PC-9 (cell line): ENCODE measurements at regions of chr18 and their contacts with region 1.

Region 1: GRCh38 chr18:3665780-3666525 is 216.0 kb downstream of the TGIF1 start:
- DNase-seq: peak; percentile 78 to 89
- H3K4me3 ChIP-seq: peak overlapping the region; percentile 45; the same call in 1 of the 2 replicates
- H3K27ac ChIP-seq: peak overlapping the region; percentile 96
- H3K4me1 ChIP-seq: peaks cover 33% of the 10 kb centered on the region
- H3K27me3 ChIP-seq: no peaks in the 10 kb centered on the region
- CTCF ChIP-seq: peak; percentile 97

Region 2: GRCh38 chr18:3261371-3262246 is 404.3 kb before region 1 on chr18 and contains the start of gene MYL12B:
- CTCF ChIA-PET with region 1: no interaction called
- POLR2A ChIA-PET with region 1: interaction called, 4 read pairs
- intact Hi-C with region 1: loop called (anchors 5 kb)
- DNase-seq: peak; percentile 77 to 89
- H3K4me3 ChIP-seq: peak within 1 kb of the TSS; percentile 100
- H3K27ac ChIP-seq: peak within 1 kb of the TSS; percentile 93
- H3K4me1 ChIP-seq: peaks cover 39% of the 10 kb centered on the region
- H3K27me3 ChIP-seq: no peaks in the 10 kb centered on the region
- CTCF ChIP-seq: no peak
- total RNA-seq, gene MYL12B: 381 and 383 TPM in 2 replicates

Region 3: DNA sequence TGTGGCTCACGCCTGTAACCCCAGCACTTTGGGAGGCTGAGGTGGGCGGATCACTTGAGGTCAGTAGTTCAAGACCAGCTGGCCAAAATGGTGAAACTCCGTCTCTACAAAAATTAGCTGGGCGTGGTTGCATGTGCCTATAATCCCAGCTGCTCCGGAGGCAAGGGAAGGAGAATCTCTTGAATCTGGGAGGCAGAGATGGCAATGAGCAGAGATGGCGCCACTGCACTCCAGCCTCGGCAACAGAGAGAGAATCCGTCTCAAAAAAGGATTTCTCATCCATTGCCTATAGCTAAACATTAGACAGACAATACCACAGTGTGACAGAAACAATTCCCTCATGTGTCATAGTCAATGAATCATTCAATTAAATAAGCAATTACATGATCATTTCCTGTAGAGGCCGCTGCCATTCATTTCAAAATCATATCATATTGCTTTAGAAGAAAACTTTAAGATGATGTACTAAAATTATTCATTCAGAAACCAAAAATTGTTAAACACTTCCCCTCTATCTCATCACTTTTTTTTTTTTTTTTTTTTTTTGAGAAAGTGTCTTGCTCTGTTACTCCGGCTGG is 285.5 kb before region 1 on chr18:
- CTCF ChIA-PET with region 1: interaction called, 6 read pairs
- POLR2A ChIA-PET with region 1: interaction called, 3 read pairs
- intact Hi-C with region 1: loop called (anchors 5 kb)
- DNase-seq: peak in 1 of 2 experiments; percentile 81
- H3K4me3 ChIP-seq: peak overlapping the region; percentile 35; the same call in 1 of the 2 replicates
- H3K27ac ChIP-seq: peak overlapping the region; percentile 99
- H3K4me1 ChIP-seq: peaks cover 64% of the 10 kb centered on the region
- H3K27me3 ChIP-seq: no peaks in the 10 kb centered on the region
- CTCF ChIP-seq: peak; percentile 44; the same call in 1 of the 2 replicates

Region 4: DNA sequence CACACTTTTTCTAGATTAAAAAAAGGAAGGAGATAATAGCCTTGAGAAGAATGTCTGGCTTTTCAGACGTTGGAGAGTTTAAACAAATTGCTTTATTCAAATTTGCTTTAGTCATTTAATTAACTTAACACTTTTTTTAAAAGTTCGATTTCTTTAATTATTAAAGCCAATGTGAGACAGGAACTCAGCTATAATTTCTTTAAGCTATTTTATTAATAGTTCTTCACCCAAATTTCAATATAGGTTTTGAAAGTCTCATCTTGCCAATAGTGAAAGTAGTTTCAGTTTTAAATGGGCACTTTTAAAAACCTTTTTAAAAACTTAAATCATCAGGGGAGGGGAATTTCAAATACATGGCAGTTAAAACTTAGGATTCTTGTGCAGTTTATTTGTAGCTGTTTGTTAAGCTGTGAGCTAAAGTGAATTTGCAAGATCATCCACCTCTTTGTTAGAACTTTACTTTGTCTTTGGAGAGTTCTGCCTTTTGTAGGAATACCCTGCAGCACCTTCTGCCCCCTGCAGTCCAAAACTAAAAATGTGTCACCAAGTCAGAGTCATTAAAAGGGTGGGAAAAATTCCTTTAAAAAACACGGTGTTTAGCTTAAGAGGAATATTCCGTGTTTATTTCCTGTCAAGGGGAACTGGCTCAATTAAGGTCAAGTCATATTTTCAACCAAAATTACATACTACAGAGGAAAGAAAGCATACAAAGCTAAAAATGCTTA is 211.4 kb before region 1 on chr18:
- CTCF ChIA-PET with region 1: no interaction called
- POLR2A ChIA-PET with region 1: interaction called, 9 read pairs
- intact Hi-C with region 1: loop called (anchors 1 kb)
- DNase-seq: peak; percentile 41 to 52
- H3K4me3 ChIP-seq: peak overlapping the region; percentile 83
- H3K27ac ChIP-seq: peak overlapping the region; percentile 96
- H3K4me1 ChIP-seq: peaks cover 49% of the 10 kb centered on the region
- H3K27me3 ChIP-seq: no peaks in the 10 kb centered on the region; the same call in 1 of the 2 replicates
- CTCF ChIP-seq: peak; percentile 79

Region 5: GRCh38 chr18:3604498-3605408 is 61.2 kb before region 1 on chr18:
- CTCF ChIA-PET with region 1: interaction called, 3 read pairs
- POLR2A ChIA-PET with region 1: interaction called, 20 read pairs
- intact Hi-C with region 1: loop called (anchors 1 kb)
- DNase-seq: peak in 1 of 2 experiments; percentile 97
- H3K4me3 ChIP-seq: peak overlapping the region; percentile 72
- H3K27ac ChIP-seq: peak overlapping the region; percentile 100
- H3K4me1 ChIP-seq: peaks cover 32% of the 10 kb centered on the region
- H3K27me3 ChIP-seq: no peaks in the 10 kb centered on the region
- CTCF ChIP-seq: no peak

Region 6: GRCh38 chr18:3652380-3653262 is 13.3 kb before region 1 on chr18:
- CTCF ChIA-PET with region 1: interaction called, 31 read pairs
- POLR2A ChIA-PET with region 1: interaction called, 22 read pairs
- intact Hi-C with region 1: loop called (anchors 1 kb)
- DNase-seq: peak; percentile 97 to 99
- H3K4me3 ChIP-seq: peak overlapping the region; percentile 63
- H3K27ac ChIP-seq: peak overlapping the region; percentile 99
- H3K4me1 ChIP-seq: peaks cover 80% of the 10 kb centered on the region
- H3K27me3 ChIP-seq: no peaks in the 10 kb centered on the region
- CTCF ChIP-seq: 0 out of 2 replicates have a peak, but pooled peaks have one; percentile 19

Region 7: GRCh38 chr18:3758531-3758930 is 92.6 kb after region 1 on chr18:
- CTCF ChIA-PET with region 1: no interaction called
- POLR2A ChIA-PET with region 1: no interaction called
- intact Hi-C with region 1: no loop called
- DNase-seq: peak in 1 of 2 experiments; percentile 56
- H3K4me3 ChIP-seq: no peak overlapping the region
- H3K27ac ChIP-seq: no peak overlapping the region
- H3K4me1 ChIP-seq: no peaks in the 10 kb centered on the region
- H3K27me3 ChIP-seq: no peaks in the 10 kb centered on the region
- CTCF ChIP-seq: no peak

Region 8: GRCh38 chr18:3839481-3840075 is 173.6 kb after region 1 on chr18:
- CTCF ChIA-PET with region 1: no interaction called
- POLR2A ChIA-PET with region 1: no interaction called
- intact Hi-C with region 1: no loop called
- DNase-seq: no peak
- H3K4me3 ChIP-seq: no peak overlapping the region
- H3K27ac ChIP-seq: no peak overlapping the region
- H3K4me1 ChIP-seq: no peaks in the 10 kb centered on the region
- H3K27me3 ChIP-seq: no peaks in the 10 kb centered on the region
- CTCF ChIP-seq: no peak